Motor neuron (in vitro differentiated cells): ENCODE measurements at regions of chr12 and their contacts with region 1.

Region 1: DNA sequence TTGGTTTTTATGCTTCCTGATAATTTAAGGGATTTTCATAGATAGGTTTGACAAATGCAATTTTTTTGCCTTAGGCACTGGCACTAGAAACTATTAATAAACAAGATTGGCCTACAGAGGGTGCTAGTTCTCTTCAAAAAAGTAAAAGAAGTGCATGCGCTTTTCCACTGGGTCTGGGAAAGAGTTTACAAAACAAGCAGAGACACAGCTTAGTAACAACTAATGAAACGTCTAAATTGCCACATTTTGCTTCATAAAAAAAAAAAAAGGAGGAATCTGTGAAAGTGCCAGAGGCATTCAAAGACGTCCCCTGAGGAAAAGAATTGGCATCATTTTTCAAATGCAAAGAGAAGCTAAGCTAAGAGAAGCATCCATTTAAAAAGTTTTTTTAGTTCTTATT is 58.3 kb upstream of the EEA1 start:
- ATAC-seq: peak; percentile 45 to 87 (median 60)
- H3K4me3 ChIP-seq: no peak overlapping the region
- H3K27ac ChIP-seq: no peak overlapping the region
- H3K4me1 ChIP-seq: no peaks in the 10 kb centered on the region

Region 2: DNA sequence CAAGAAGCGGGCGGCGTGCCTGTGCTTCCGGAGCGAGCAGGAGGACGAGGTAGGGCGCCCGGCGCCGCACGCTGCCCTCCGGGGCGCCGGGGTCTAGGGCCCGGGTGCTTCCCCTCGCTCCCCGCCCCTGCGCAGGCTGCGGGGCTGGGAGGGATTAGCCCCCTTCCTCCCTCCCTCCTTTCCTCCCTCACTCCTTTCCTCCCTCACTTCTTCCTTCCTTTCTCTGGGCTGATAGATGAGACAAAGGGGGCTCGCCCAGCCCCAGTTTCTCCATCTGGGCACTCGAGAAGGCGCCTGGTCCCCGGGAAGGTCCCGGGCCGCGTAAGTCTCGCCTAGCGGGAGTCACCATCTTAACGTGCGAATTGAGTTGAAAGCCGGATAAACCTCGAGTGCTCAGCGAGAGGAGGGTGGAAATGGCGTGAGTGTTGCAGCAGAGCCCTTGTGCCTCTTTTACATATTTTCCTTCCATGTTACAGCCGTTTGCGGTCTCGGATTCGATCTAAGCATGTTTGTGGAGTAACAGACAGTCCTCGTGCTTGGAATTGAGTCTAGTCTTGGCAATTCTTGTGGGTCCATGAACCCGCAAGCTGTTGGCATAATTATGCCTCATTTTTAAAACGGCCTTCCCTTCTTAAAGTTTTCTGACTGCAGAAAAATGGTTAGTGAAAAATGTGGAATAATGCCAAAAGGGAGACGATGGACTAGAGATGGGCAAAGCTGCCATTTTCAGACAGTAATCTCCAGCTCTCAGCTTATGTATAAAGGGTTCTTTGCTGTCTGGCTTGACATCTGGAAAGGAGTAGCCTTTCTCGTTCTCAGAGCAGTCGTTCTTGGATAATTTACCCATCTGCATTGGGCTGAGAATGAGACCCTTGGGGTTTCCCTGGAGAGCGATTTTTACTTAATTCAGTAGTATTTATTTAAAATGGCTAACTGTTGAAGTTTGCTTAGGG is 391.3 kb after region 1 on chr12:
- in situ Hi-C with region 1: loop called in 6 of 9 experiments (anchors 25 kb)
- ATAC-seq: peak; percentile 31 to 52 (median 35)
- H3K4me3 ChIP-seq: peak overlapping the region; percentile 67 to 98 (median 96)
- H3K27ac ChIP-seq: peak overlapping the region; percentile 54 to 84
- H3K4me1 ChIP-seq: peaks cover 10 to 13% of the 10 kb centered on the region in 2 donors

Region 3: DNA sequence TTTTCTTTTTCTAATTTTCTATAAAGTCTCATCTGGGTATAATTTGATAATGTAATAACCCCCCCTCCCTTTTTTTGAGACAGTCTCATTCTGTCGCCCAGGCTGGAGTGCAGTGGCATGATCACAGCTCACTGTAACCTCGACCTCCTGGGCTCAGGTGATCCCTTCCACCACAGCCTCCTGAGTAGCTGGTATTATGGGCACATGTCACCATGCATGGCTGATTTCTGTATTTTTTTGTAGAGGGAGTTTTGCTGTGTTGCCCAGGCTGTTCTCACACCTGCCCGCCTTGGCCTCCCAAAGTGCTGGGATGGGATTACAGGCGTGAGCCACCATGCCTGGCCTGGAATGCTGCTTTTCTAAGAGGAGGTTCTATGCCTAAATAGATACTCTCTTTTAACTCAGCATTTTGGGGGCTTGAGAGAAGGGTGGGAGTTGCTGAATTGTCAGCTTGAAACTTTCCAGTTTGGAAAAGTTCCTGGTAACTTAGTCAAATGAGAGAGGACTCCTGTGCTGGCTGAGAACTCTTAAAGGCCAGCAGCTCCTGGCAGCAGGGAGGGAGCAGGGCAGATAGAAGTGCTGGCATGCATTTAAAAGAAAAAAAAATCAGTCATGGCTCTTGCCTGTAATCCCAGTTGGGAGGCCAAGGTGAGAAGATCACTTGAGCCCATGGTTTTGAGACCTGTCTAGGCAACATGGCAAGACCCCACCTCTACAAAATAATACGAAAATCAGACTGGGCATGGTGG is 403.4 kb after region 1 on chr12:
- in situ Hi-C with region 1: loop called in 8 of 9 experiments (anchors 5 to 25 kb)
- ATAC-seq: peak in 1 of 8 experiments; percentile 59
- H3K4me3 ChIP-seq: no peak overlapping the region
- H3K27ac ChIP-seq: no peak overlapping the region
- H3K4me1 ChIP-seq: no peaks in the 10 kb centered on the region

Region 4: DNA sequence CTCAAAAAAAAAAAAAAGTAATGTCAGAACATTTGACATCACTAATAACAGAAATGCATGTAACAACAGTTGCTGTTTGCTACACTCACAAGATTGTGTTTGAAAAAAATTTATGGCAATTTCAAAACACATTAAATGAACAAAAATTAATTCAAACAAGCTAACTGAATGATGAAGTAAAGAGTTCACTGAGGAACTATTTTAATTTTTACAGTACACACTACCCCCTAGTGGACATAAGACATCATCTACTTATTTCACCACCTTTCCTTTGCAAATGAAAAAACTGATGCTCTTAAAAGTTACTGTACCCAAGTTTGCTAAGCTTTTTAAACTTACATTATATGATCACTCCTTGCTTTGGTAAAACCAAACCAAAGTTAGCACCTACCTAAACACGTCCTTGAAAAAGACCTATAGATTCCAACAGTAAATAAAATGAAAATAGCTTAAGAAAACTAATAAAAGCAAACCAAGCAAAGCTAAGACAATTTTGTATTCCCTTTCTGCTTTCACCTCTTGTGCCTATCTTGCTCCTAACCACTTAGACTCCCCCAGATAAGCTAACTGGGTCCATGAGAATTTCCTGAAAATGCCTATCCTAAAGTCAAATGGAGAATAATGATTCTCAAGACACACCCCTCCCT is 432.1 kb after region 1 on chr12:
- in situ Hi-C with region 1: loop called in 1 of 9 experiments (anchors 25 kb)
- ATAC-seq: peak in 4 of 8 experiments; percentile 34 to 78 (median 69)
- H3K4me3 ChIP-seq: no peak overlapping the region
- H3K27ac ChIP-seq: no peak overlapping the region
- H3K4me1 ChIP-seq: peaks cover 5 to 9% of the 10 kb centered on the region in 2 donors

Region 5: DNA sequence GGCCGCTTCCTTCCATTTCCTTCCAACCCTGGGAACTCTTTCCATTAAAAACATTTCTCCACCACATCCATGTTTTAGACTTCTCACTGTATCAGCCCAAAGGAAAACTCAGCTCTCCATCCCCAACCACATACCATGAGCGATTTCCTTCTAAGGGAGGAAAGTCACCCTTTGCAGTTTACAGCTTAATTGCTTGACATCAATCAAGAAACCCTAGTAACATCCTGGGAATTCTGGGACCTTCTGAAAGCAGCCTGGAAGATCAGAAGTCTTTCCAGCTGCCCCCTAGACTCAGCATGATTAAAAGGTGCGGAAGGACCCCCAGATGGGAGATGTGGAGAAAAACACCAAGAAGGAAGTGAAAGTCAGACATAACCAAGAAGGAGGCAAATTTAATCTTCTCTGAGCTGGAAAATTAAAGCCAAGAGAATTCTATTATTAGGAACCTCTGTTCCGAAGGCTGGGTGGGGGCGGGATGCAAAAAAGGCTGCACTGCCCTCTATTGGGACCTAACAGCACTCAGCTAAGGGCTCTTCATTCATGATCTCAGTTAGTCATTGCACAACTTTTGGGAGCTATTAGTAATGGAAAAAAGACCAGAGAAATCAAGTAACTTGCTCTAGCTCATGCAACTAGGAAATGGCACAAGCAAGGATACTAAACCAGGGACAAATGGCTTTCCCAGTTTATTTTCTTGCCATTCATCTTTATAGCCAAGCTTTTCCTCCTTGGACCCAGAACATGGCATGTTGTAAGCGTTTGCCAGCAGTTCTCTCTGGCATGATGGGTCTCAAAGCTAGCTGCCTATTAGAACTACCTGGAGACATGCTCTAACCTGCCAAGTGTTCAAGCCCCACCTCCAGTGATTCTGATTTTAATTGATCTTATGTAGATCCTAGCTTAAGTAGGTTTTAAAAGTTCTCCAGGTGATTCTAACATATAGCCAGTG is 1087.9 kb after region 1 on chr12:
- in situ Hi-C with region 1: loop called in 1 of 9 experiments (anchors 25 kb)
- ATAC-seq: peak; percentile 48 to 98 (median 71)
- H3K4me3 ChIP-seq: no peak overlapping the region
- H3K27ac ChIP-seq: no peak overlapping the region
- H3K4me1 ChIP-seq: peaks cover 0 to 3% of the 10 kb centered on the region in 2 donors

Region 6: DNA sequence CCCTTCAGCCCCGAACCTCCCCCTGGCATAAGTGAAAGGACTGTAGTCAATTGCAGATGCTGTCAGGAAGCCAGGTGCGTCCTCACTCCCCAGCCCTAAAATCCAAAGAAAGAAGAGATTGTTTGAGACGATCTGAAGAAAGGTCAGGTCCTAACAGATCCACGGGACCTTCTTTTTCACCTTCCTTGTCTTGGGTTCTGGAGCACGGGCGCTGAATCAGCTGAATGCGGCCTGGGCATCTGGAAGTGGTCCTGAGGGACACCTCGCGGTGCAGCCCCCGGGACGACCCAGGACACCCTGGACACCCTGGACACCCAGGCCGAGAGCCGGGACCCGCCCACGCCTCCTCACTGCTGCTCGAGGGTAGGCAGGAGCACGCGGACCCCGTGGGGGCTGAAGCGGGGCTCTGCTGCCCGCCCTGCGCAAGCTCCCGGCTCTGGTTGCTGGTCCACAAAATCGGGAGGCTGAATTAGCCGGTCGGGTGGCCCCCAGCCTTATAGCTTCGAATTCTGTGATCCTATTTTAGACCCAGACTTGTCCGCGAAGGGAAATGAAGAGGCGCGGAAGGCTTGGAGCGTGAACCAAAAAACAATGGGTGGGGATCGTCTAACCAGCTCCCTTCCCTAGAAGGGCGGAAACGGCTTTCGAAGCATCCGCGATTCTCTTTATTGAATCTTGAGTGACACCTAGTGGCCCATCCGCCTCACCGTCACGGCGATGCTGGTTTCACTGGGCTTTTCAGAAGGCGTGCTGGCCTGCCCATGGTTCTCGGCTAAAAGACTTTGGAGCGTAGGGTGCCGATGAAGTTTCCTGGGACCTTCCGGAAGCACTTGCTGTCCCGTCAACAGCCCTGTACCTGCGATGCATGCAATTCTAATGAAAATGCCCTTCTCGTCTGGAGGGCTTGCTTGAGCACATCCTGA is 1114.6 kb after region 1 on chr12:
- in situ Hi-C with region 1: loop called in 4 of 9 experiments (anchors 25 kb)
- ATAC-seq: peak; percentile 74 to 88 (median 81)
- H3K4me3 ChIP-seq: peak overlapping the region; percentile 36 to 50 (median 46)
- H3K27ac ChIP-seq: no peak overlapping the region
- H3K4me1 ChIP-seq: peaks cover 0 to 2% of the 10 kb centered on the region in 2 donors